ENCODE measurements at regions of chr2 and their contacts with region 1.

Region 1: GRCh38 chr2:200471324-200471848 is 38.5 kb downstream of the KCTD18 start:
- DNase-seq: peak; percentile 49
- H3K4me3 ChIP-seq: no peak overlapping the region
- H3K27ac ChIP-seq: no peak overlapping the region
- H3K4me1 ChIP-seq: peaks cover 26% of the 10 kb centered on the region
- CTCF ChIP-seq: peak; percentile 86

Region 2: GRCh38 chr2:200306196-200306930 is 165.0 kb before region 1 on chr2 and contains the start of gene SPATS2L:
- CTCF ChIA-PET with region 1: no interaction called
- POLR2A ChIA-PET with region 1: interaction called, 5 read pairs
- intact Hi-C with region 1: loop called (anchors 5 kb)
- DNase-seq: peak; percentile 34
- H3K4me3 ChIP-seq: peak within 1 kb of the TSS; percentile 70
- H3K27ac ChIP-seq: no peak within 1 kb of the TSS
- H3K4me1 ChIP-seq: peaks cover 5% of the 10 kb centered on the region
- CTCF ChIP-seq: no peak
- total RNA-seq, gene SPATS2L: 5.2 and 8.4 TPM in 2 replicates

Region 3: DNA sequence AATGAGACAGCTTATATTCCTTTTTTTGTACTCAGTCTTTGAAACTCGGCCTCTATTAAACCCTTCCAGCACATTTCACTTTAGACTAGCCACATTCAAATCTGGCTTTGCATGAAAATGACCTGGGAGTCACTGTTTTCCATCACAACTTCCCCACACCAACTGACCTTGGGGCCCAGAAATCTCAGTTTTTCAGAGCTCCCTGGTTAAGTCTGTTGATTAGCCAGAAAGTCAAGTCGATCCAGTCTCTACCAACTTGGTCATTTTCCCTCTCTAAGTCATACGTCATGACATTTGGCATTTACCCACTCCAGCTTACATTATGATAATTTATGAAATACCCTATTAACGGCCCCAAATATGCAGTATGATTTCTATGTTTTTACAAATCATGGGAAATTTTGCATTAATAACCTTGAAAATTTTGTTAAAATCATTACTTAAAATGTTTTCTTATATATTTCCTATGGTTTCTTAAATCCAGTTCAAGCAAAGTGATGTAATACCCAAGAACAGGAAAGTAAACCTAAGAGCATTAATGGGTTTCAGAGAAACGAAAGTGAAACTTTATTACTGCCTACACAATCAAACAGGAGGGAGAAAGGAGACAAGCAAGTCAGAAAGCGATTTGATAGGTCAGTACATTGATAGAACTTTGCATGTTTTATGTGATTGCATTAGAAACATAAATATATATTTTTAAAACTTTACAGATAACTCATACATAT is 87.8 kb before region 1 on chr2:
- CTCF ChIA-PET with region 1: no interaction called
- POLR2A ChIA-PET with region 1: interaction called, 3 read pairs
- intact Hi-C with region 1: loop called (anchors 5 kb)
- DNase-seq: peak; percentile 36
- H3K4me3 ChIP-seq: no peak overlapping the region
- H3K27ac ChIP-seq: no peak overlapping the region
- H3K4me1 ChIP-seq: peaks cover 10% of the 10 kb centered on the region
- CTCF ChIP-seq: no peak

Region 4: GRCh38 chr2:200445284-200445683 is 26.1 kb before region 1 on chr2:
- CTCF ChIA-PET with region 1: interaction called, 3 read pairs
- POLR2A ChIA-PET with region 1: interaction called, 9 read pairs
- intact Hi-C with region 1: loop called (anchors 1 kb)
- DNase-seq: no peak
- H3K4me3 ChIP-seq: no peak overlapping the region
- H3K27ac ChIP-seq: no peak overlapping the region
- H3K4me1 ChIP-seq: no peaks in the 10 kb centered on the region
- CTCF ChIP-seq: peak; percentile 50; the same call in 1 of the 2 replicates